PC-9 (cell line): ENCODE measurements at regions of chr15 and their contacts with region 1.

Region 1: GRCh38 chr15:90994417-90995311 is at the start of gene PRC1:
- DNase-seq: peak; percentile 93 to 99
- H3K4me3 ChIP-seq: peak within 1 kb of the TSS; percentile 73
- H3K27ac ChIP-seq: peak within 1 kb of the TSS; percentile 67
- H3K4me1 ChIP-seq: peaks cover 13% of the 10 kb centered on the region
- H3K27me3 ChIP-seq: no peaks in the 10 kb centered on the region
- CTCF ChIP-seq: no peak
- total RNA-seq, gene PRC1: 145 and 180 TPM in 2 replicates

Region 2: DNA sequence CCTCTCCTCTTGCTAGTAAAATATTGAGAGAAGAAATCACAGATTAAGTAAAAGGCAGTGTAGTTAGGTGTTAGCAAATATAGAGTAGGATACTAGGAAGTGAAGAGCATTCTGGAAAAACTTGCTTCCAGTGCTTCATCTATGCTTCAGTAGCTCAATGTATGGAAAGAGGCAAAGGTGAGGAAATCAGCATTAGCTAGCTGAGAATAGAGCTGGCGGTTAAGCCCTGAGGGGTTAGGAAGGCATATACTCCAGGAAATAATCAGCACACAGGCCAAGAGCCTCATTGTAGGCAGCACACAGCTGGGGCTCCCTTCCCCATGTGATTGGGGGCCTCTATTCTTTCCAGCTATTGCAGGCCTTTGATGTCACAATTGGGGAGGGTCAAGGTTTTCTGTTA is 26.2 kb before region 1 on chr15:
- CTCF ChIA-PET with region 1: no interaction called
- POLR2A ChIA-PET with region 1: interaction called, 15 read pairs
- intact Hi-C with region 1: no loop called
- DNase-seq: no peak
- H3K4me3 ChIP-seq: no peak overlapping the region
- H3K27ac ChIP-seq: no peak overlapping the region; the same call in 1 of the 2 replicates
- H3K4me1 ChIP-seq: no peaks in the 10 kb centered on the region
- H3K27me3 ChIP-seq: no peaks in the 10 kb centered on the region
- CTCF ChIP-seq: no peak

Region 3: DNA sequence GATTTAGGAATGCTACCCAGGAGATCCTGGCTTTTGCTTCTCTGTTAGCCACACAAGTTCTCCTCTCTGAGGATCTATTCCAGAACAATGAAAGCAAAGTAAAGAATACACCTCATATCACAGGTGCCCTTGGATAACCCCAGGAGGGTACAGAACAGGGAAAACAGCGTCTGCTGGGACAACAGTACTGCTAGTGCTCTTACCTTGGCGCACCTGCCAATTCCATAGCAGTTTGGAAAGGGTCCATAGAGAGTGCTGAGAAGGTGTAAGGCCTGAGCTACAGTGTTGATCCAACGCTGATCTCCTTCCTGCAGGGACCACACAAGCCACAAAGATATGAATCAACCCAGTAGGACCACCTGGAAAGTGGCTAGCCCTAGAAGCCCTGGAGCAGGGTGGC is 12.6 kb after region 1 on chr15:
- CTCF ChIA-PET with region 1: no interaction called
- POLR2A ChIA-PET with region 1: no interaction called
- intact Hi-C with region 1: no loop called
- DNase-seq: no peak
- H3K4me3 ChIP-seq: no peak overlapping the region
- H3K27ac ChIP-seq: no peak overlapping the region
- H3K4me1 ChIP-seq: no peaks in the 10 kb centered on the region
- H3K27me3 ChIP-seq: no peaks in the 10 kb centered on the region
- CTCF ChIP-seq: no peak